WTC11 (cell line): ENCODE measurements at regions of chr22 and their contacts with region 1.

Region 1: GRCh38 chr22:17501679-17502285 is 61.5 kb upstream of the SLC25A18 start:
- DNase-seq: no peak
- ATAC-seq: peak; percentile 79
- H3K4me3 Mint-ChIP-seq: no peak overlapping the region
- H3K27ac Mint-ChIP-seq: 0 out of 2 replicates have a peak overlapping the region, but pooled peaks have one; percentile 74
- H3K4me1 Mint-ChIP-seq: peaks cover 2% of the 10 kb centered on the region; the same call in 1 of the 2 replicates
- H3K27me3 Mint-ChIP-seq: no peaks in the 10 kb centered on the region
- CTCF ChIP-seq: peak; percentile 42; the same call in 1 of the 2 replicates

Region 2: GRCh38 chr22:17237038-17237668 is 264.6 kb before region 1 on chr22:
- CTCF ChIA-PET with region 1: interaction called, 14 read pairs
- POLR2A ChIA-PET with region 1: no interaction called
- DNase-seq: no peak
- ATAC-seq: no peak
- H3K4me3 Mint-ChIP-seq: no peak overlapping the region
- H3K27ac Mint-ChIP-seq: peak overlapping the region; percentile 91
- H3K4me1 Mint-ChIP-seq: peaks cover 62% of the 10 kb centered on the region
- H3K27me3 Mint-ChIP-seq: no peaks in the 10 kb centered on the region
- CTCF ChIP-seq: no peak

Region 3: GRCh38 chr22:17272511-17272991 is 229.2 kb before region 1 on chr22:
- CTCF ChIA-PET with region 1: interaction called, 18 read pairs
- POLR2A ChIA-PET with region 1: interaction called, 4 read pairs
- DNase-seq: peak; percentile 65
- ATAC-seq: peak; percentile 83
- H3K4me3 Mint-ChIP-seq: peak overlapping the region; percentile 27; the same call in 1 of the 2 replicates
- H3K27ac Mint-ChIP-seq: peak overlapping the region; percentile 98
- H3K4me1 Mint-ChIP-seq: peaks cover 54% of the 10 kb centered on the region
- H3K27me3 Mint-ChIP-seq: no peaks in the 10 kb centered on the region
- CTCF ChIP-seq: no peak

Region 4: GRCh38 chr22:17368554-17369438 is 133.0 kb before region 1 on chr22:
- CTCF ChIA-PET with region 1: interaction called, 20 read pairs
- POLR2A ChIA-PET with region 1: interaction called, 3 read pairs
- DNase-seq: peak; percentile 89
- ATAC-seq: peak; percentile 66
- H3K4me3 Mint-ChIP-seq: peak overlapping the region; percentile 78
- H3K27ac Mint-ChIP-seq: peak overlapping the region; percentile 94
- H3K4me1 Mint-ChIP-seq: peaks cover 45% of the 10 kb centered on the region
- H3K27me3 Mint-ChIP-seq: no peaks in the 10 kb centered on the region
- CTCF ChIP-seq: no peak

Region 5: GRCh38 chr22:17471886-17472535 is 29.8 kb before region 1 on chr22:
- CTCF ChIA-PET with region 1: interaction called, 10 read pairs
- POLR2A ChIA-PET with region 1: no interaction called
- DNase-seq: no peak
- ATAC-seq: peak; percentile 31; the same call in 1 of the 2 replicates
- H3K4me3 Mint-ChIP-seq: no peak overlapping the region
- H3K27ac Mint-ChIP-seq: peak overlapping the region; percentile 30
- H3K4me1 Mint-ChIP-seq: peaks cover 88% of the 10 kb centered on the region
- H3K27me3 Mint-ChIP-seq: no peaks in the 10 kb centered on the region
- CTCF ChIP-seq: no peak

Region 6: DNA sequence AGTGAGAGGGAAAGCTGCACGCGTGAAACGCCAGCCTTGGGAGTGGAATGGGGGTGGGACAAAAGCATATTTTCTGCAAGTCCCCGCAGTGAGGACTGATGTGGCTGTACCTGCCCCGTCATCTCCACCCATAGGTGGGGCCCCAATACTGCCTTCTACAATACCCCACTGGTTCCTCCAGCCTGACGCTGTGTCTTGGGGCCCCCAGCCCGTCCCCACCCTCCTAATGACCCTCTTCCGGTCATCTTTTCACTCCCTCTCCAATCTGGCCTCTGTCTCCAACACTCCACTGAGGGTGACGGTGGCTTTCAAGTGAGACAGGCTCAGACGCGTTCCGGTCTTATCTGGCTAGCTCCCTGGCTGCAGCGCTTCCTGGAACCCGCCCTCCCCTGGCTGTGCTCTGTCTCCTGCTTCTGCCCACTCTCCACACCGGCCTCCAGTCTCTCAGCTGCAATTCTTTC is 418.4 kb after region 1 on chr22:
- CTCF ChIA-PET with region 1: no interaction called
- POLR2A ChIA-PET with region 1: no interaction called
- DNase-seq: peak; percentile 47
- ATAC-seq: peak; percentile 42
- H3K4me3 Mint-ChIP-seq: peak overlapping the region; percentile 12; the same call in 1 of the 2 replicates
- H3K27ac Mint-ChIP-seq: peak overlapping the region; percentile 91
- H3K4me1 Mint-ChIP-seq: peaks cover 8% of the 10 kb centered on the region; the same call in 1 of the 2 replicates
- H3K27me3 Mint-ChIP-seq: no peaks in the 10 kb centered on the region
- CTCF ChIP-seq: no peak